ENCODE measurements at regions of chr14 and their contacts with region 1.

Region 1: GRCh38 chr14:33792720-33793368 is 158.0 kb downstream of the EGLN3 start:
- DNase-seq: peak; percentile 80

Region 2: GRCh38 chr14:33131801-33132200 is 661.0 kb before region 1 on chr14:
- CTCF ChIA-PET with region 1: interaction called, 11 read pairs
- POLR2A ChIA-PET with region 1: no interaction called
- DNase-seq: no peak

Region 3: GRCh38 chr14:33676135-33676566 is 116.7 kb before region 1 on chr14:
- CTCF ChIA-PET with region 1: interaction called, 30 read pairs
- POLR2A ChIA-PET with region 1: no interaction called
- DNase-seq: peak; percentile 81

Region 4: GRCh38 chr14:33811721-33812120 is 18.9 kb after region 1 on chr14:
- CTCF ChIA-PET with region 1: no interaction called
- POLR2A ChIA-PET with region 1: no interaction called
- DNase-seq: no peak

Region 5: DNA sequence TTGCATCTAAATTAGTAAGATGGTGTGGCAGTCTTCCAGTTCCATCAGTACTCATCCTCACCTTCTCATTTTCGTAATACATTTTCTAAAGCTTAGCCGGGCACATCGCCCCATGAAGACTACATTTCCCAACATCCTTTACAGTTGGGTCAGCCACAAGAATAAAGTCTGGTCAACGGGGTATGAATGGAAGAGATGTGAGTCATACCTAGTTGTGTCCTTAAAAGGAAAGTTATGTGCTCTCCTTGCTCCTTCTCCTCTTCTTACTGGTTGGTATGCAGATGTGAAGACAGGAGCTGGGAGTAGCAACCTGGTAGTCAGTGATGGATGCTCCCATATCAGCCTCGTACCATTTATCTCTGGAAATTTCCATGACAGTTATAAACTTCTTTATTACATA is 194.0 kb after region 1 on chr14:
- CTCF ChIA-PET with region 1: no interaction called
- POLR2A ChIA-PET with region 1: no interaction called
- DNase-seq: no peak

Region 6: DNA sequence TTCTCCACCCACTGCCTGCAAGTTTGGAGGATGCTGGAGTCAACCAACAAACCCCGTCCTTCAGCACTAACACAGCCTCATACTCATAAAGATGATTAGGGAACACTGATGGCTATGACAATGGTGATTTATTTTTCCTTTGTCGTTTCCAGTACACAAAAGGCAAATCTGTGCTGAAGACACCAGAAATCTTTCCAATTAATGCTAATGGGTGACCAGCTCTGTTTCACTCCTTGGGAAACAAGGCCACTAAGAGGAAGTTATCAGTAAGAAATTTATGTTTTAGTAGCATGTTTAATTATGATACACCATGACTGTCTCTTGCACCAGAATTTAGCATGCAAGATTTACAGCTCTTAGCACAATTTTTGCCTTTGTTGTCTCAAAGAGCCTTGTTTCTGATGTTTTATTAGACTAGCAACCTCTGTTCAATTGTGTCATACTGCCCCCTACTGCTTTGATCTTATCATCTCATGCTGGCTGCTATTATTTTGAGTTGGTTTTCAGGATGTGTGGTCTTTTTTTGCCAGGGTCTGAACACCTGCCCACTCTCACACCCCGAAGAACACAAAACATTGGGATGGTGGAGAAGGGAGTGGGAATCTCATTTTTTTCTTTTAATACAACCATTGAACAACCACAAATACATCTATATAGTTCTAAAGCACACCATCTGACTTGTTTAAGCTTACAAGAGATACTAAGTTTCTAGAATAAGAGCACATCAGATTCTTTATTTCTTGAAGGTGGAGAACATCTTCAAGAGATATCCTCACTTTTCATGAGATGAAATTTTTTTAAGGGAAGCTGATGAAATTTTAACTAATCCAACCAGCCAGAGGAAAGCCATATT is 508.3 kb after region 1 on chr14:
- CTCF ChIA-PET with region 1: interaction called, 10 read pairs
- POLR2A ChIA-PET with region 1: no interaction called
- DNase-seq: peak; percentile 53

Measured in HEK293T (cell line).